Posterior vena cava (tissue), 2 donors: ENCODE measurements at regions of chr17 and their contacts with region 1.

Region 1: DNA sequence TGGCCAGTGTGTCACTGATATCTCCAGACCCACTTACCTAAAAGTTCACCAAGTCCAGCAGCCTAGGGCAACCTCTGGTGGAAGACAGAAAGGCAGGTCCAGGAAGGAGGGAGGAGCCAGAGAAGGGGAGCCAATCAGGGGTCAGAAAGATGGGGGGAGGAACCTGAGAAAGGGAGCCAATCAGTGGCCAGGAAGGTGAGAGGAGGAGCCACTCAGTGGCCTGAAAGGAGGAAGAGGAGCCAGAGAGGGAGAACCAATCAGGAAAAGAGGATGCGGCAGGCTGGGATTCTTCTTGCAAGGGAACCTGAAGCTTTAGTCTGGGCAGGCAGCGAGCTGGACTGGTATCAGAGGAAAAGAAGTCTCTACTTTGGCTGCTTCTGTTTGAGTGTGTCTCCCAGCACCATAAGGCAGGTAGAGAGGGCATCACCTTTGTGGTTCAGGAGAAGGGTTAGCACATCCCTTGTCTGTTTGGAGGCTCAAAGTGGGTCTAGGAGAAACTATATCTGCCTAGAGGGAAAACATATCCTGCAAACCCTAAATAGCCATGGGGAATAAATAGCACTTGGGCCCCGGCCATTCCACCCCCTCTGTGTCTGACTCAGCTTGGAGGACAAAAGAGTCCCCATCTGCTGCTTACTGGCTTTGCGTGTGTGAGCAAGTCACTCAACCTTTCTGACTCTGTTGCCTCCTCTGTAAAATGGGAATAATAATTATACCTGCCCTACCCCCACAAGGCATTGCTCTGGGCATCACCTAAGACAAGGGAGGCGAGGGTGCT is 43.4 kb upstream of the CRHR1 start:
- DNase-seq: peak; percentile 42

Region 2: DNA sequence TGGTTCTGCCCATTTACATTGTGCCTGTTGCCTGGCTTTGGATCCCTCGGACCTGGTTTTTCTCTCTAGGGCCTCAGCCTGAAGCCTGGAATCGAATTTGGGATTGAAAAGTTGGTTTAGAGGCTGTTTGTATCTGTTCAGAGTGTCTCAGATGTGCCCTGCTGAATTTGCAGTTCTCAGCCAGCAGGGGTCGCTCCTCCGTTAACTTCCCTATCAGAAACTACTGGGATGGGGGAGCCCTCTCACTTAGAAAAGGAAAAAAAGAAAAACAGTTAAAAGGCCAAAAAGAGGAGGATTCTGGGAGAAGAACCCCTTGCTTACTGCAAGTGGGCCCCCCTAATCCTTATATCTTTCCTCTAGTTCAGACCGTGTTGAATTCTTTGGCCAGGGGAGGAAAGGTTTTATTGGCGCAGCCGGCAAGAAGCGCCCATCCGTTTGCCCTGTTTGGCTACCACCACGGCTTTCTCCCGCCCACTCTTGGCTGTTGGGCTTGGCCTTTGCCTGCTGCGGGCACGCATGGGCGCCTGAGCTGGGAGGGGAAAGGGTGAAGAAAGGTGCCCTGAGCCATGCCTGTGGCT is 1174.8 kb before region 1 on chr17:
- intact Hi-C with region 1: loop called in 1 of 2 experiments (anchors 10 kb)
- DNase-seq: no peak